ENCODE measurements at regions of chr1 and their contacts with region 1.

Region 1: DNA sequence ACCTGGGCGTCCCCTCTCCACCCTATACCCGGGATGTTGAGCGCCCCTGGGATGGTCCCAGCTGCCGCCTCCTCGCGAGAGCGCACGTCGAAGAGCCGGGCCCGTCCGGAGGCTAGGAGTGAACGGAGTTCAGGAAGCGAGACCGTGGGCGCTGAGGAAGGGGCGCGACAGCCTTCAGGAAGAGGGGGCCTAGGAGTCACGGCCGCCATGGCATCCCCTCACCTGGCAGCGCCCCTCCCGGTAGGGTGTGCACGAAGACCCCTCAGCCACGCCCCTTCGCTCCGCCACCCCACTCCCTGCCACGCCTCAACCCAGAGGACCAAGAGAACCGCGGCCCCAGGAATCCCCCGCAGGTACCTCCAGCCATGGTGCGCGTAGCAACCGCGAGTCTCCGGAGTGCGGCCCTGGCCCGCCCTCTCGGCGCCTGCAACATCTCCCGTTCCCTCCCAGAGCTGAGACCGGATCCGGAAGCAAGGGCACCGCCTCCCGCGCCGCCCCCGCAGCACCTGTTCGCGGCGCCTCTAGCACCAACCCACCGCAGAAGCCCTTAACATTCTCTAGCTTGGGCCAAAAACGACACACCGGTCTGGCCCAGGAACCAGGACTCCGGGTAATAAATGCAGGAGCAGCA is at the start of gene TSTD1:
- DNase-seq: no peak
- ATAC-seq: peak; percentile 94
- H3K4me3 ChIP-seq: peak within 1 kb of the TSS; percentile 87
- H3K27ac ChIP-seq: peak within 1 kb of the TSS; percentile 69
- H3K4me1 ChIP-seq: peaks cover 12% of the 10 kb centered on the region
- H3K27me3 ChIP-seq: no peaks in the 10 kb centered on the region
- CTCF ChIP-seq: no peak
- EP300 ChIP-seq: no peak
- POLR2A ChIP-seq: peak; percentile 96
- RAD21 ChIP-seq: no peak
- polyA plus RNA-seq, gene TSTD1: 102 to 145 TPM

Region 2: GRCh38 chr1:160768295-160768657 is 270.4 kb before region 1 on chr1:
- CTCF ChIA-PET with region 1: no interaction called
- POLR2A ChIA-PET with region 1: no interaction called
- RAD21 ChIA-PET with region 1: no interaction called
- SMC1A ChIA-PET with region 1: no interaction called
- in situ Hi-C with region 1: no loop called
- intact Hi-C with region 1: no loop called
- DNase-seq: peak; percentile 84
- ATAC-seq: peak; percentile 94
- H3K4me3 ChIP-seq: peak overlapping the region; percentile 59
- H3K27ac ChIP-seq: peak overlapping the region; percentile 89
- H3K4me1 ChIP-seq: peaks cover 23% of the 10 kb centered on the region
- H3K27me3 ChIP-seq: no peaks in the 10 kb centered on the region
- CTCF ChIP-seq: peak; percentile 90 to 97 (median 91)
- EP300 ChIP-seq: no peak
- POLR2A ChIP-seq: no peak; the same call in 1 of the 2 replicates
- RAD21 ChIP-seq: peak; percentile 96

Region 3: DNA sequence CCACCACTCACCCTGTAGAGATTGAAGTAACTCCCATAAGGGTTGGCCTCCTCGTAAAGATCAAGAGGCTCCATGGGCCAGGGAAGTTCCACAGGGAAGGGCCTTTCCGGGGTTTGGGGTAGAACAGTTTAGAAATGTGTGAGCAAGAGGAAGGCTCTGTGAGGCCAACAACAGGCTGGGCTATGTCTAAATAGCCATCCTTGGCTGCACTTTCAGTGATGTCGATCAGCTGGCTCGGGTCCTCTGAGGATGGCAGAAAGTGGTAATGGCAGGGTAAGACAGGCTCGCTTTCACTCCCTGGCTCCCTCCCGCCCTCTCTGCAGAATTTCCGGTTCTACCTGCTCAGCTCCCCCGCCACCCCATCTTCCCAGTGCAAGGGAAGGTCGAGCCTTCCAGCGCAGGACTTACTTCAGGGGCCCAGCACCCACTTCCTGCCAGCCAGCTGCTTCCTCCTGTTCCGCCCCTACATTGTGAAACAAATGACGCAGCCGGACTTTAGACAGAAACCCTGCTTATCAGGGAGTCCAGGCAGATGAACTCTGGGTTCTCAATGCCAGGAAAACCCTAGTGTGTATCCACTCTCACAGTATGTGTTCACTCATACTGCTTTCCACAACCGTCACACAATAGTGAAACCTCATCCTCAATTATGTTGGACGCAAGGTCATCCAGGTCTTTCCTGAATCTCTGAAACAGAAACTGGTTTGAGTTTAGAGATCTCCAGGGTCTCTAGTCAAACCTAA is 25.0 kb before region 1 on chr1:
- CTCF ChIA-PET with region 1: interaction called, 14 read pairs
- POLR2A ChIA-PET with region 1: interaction called, 13 read pairs
- RAD21 ChIA-PET with region 1: interaction called, 14 read pairs
- SMC1A ChIA-PET with region 1: interaction called, 8 read pairs
- in situ Hi-C with region 1: no loop called
- intact Hi-C with region 1: no loop called
- DNase-seq: peak; percentile 74
- ATAC-seq: peak; percentile 92
- H3K4me3 ChIP-seq: peak overlapping the region; percentile 65
- H3K27ac ChIP-seq: peak overlapping the region; percentile 97
- H3K4me1 ChIP-seq: peaks cover 28% of the 10 kb centered on the region
- H3K27me3 ChIP-seq: no peaks in the 10 kb centered on the region
- CTCF ChIP-seq: no peak
- EP300 ChIP-seq: peak in 1 of 2 experiments; percentile 39; a peak in 1 of 4 replicates
- POLR2A ChIP-seq: peak; percentile 74
- RAD21 ChIP-seq: no peak

Region 4: DNA sequence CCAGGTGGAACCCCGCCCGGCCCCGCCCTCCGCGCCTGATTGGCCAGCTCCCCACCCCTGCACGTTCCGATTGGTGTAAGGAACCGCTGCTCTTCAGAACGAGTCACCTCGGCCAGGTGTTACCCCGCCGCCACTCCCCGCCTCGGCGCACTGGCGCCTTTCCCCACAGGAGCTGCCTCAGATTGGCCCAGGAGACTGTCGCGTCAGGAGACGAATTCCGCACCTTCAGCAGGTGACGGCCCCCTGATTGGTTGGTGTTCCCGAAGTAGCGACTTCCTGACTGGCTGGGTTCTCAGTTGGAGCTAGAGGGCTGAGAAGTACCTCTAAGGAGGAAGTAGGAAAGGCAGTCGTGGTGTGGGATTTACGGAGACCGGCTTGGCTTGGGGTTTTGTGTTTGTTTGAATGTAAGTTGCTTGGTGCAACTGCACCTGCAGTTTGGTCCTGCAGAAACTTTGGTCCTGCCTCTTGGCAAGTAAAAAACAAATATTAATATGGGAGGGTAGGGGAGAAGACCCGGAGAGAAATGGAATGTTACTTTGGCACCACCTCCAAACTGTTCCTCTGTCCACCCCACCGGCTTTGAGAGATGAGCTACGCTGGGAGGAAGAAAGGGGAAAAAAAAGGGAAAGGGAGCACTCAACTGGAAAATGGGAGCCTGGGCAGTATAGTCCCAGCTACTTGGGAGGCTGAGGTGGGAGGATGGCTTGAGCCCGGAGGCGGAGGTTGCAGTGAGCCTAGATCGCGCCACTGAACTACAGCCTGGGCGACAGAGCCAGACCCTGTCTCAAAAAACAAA is 17.3 kb before region 1 on chr1:
- CTCF ChIA-PET with region 1: interaction called, 18 read pairs
- POLR2A ChIA-PET with region 1: interaction called, 36 read pairs
- RAD21 ChIA-PET with region 1: interaction called, 19 read pairs
- SMC1A ChIA-PET with region 1: interaction called, 10 read pairs
- in situ Hi-C with region 1: no loop called
- intact Hi-C with region 1: no loop called
- DNase-seq: peak; percentile 66
- ATAC-seq: peak; percentile 96
- H3K4me3 ChIP-seq: peak overlapping the region; percentile 75
- H3K27ac ChIP-seq: peak overlapping the region; percentile 33
- H3K4me1 ChIP-seq: peaks cover 19% of the 10 kb centered on the region
- H3K27me3 ChIP-seq: no peaks in the 10 kb centered on the region
- CTCF ChIP-seq: no peak
- EP300 ChIP-seq: no peak
- POLR2A ChIP-seq: peak; percentile 69; the same call in 1 of the 2 replicates
- RAD21 ChIP-seq: no peak

Region 5: DNA sequence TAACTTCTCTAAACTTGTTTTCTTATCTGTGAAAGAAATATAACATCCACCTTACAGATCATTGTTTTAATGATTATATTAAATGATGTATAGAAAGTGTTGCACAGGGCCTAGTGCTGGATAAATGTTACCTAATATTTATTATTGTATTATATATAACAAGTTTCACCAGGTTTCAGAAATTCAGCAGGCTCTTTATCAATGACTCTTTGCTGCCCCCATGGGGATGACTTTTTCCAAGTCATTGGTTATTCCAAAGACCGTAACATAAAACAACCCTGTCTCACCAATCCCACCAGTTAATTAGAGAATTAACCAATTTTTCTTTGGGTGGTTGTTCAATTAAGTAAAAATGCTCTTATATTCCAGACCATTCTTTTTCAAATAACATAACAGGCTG is 101.1 kb after region 1 on chr1:
- CTCF ChIA-PET with region 1: interaction called, 32 read pairs
- POLR2A ChIA-PET with region 1: no interaction called
- RAD21 ChIA-PET with region 1: interaction called, 3 read pairs
- SMC1A ChIA-PET with region 1: interaction called, 4 read pairs
- in situ Hi-C with region 1: no loop called
- intact Hi-C with region 1: no loop called
- DNase-seq: no peak
- ATAC-seq: peak; percentile 74
- H3K4me3 ChIP-seq: no peak overlapping the region
- H3K27ac ChIP-seq: no peak overlapping the region
- H3K4me1 ChIP-seq: no peaks in the 10 kb centered on the region
- H3K27me3 ChIP-seq: no peaks in the 10 kb centered on the region
- CTCF ChIP-seq: peak; percentile 40 to 61 (median 44)
- EP300 ChIP-seq: no peak
- POLR2A ChIP-seq: no peak
- RAD21 ChIP-seq: peak; percentile 74

Region 6: GRCh38 chr1:161676958-161677689 is 638.5 kb after region 1 on chr1:
- CTCF ChIA-PET with region 1: no interaction called
- POLR2A ChIA-PET with region 1: no interaction called
- RAD21 ChIA-PET with region 1: no interaction called
- SMC1A ChIA-PET with region 1: no interaction called
- in situ Hi-C with region 1: no loop called
- intact Hi-C with region 1: no loop called
- DNase-seq: no peak
- ATAC-seq: no peak
- H3K4me3 ChIP-seq: no peak overlapping the region
- H3K27ac ChIP-seq: no peak overlapping the region
- H3K4me1 ChIP-seq: no peaks in the 10 kb centered on the region
- H3K27me3 ChIP-seq: no peaks in the 10 kb centered on the region
- CTCF ChIP-seq: no peak
- EP300 ChIP-seq: no peak
- POLR2A ChIP-seq: no peak
- RAD21 ChIP-seq: no peak